ENCODE measurements at regions of chr2 and their contacts with region 1.

Region 1: GRCh38 chr2:119759451-119760236 is at the start of gene PTPN4:
- DNase-seq: peak; percentile 88 to 98 (median 96)
- ATAC-seq: peak; percentile 97
- H3K4me3 ChIP-seq: peak within 1 kb of the TSS; percentile 89
- H3K4me3 Mint-ChIP-seq: peak within 1 kb of the TSS; percentile 87 to 97 (median 94)
- H3K27ac ChIP-seq: peak within 1 kb of the TSS; percentile 83
- H3K27ac Mint-ChIP-seq: peak within 1 kb of the TSS; percentile 60 to 95 (median 91)
- H3K4me1 ChIP-seq: peaks cover 25% of the 10 kb centered on the region in 2 donors
- H3K4me1 Mint-ChIP-seq: peaks cover 22 to 51% (median 39%) of the 10 kb centered on the region in 7 donors
- H3K27me3 ChIP-seq: no peaks in the 10 kb centered on the region
- H3K27me3 Mint-ChIP-seq: peaks cover 0 to 2% (median 0%) of the 10 kb centered on the region in 5 donors
- total RNA-seq, gene PTPN4: 59.9 to 122 (median 104) TPM

Region 2: DNA sequence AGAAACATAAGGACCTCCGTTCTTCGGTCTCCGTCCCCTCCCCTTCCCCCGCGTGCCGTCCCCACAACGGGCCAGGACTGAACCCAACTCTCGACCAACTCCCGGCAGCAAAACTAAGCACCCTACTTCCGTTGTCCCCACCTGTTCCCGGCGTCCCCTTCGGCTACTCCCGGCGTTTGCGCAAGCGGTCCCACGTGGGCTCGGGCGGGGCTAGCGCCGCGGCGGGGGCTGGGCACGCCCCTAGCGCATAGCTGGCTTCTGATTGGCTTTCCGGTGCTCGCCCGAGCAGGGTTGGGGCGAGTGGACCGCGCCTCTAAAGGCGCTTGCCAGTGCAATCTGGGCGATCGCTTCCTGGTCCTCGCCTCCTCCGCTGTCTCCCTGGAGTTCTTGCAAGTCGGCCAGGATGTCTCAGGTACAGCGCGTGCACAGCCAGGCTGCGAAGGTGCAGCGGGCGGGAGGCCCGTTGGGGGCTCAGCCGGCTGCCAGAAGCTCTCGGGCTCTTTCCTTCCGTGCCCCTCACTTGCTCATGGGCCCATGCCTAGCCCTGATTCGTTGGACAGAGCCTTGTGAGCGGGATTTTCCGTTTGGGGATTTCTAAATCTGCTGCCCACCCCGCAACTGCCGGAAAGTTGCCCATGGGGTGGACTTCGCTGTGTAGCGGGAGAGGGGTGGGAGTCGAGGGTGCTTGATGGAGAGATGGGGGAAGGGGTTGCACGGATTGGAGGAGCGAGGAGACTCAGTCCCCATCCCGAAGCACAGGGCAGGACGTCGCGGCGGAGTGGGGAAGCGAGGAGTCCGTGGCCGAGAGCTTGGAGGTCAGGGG is 392.8 kb before region 1 on chr2 and contains the starts of genes C2orf76 and DBI:
- CTCF ChIA-PET with region 1: no interaction called
- POLR2A ChIA-PET with region 1: interaction called, 4 read pairs
- intact Hi-C with region 1: loop called (anchors 1 to 5 kb)
- DNase-seq: peak; percentile 82 to 94 (median 89)
- ATAC-seq: peak; percentile 97
- H3K4me3 ChIP-seq: peak within 1 kb of the TSS; percentile 80
- H3K4me3 Mint-ChIP-seq: peak within 1 kb of the TSS; percentile 79 to 99 (median 94)
- H3K27ac ChIP-seq: peak within 1 kb of the TSS; percentile 86
- H3K27ac Mint-ChIP-seq: peak within 1 kb of the TSS; percentile 78 to 97 (median 92)
- H3K4me1 ChIP-seq: peaks cover 10 to 19% of the 10 kb centered on the region in 2 donors
- H3K4me1 Mint-ChIP-seq: peaks cover 37 to 64% (median 47%) of the 10 kb centered on the region in 7 donors
- H3K27me3 ChIP-seq: no peaks in the 10 kb centered on the region
- H3K27me3 Mint-ChIP-seq: no peaks in the 10 kb centered on the region
- total RNA-seq, gene C2orf76: 5.1 to 9.2 (median 8.5) TPM
- total RNA-seq, gene DBI: 29.3 to 111 (median 42.7) TPM

Region 3: DNA sequence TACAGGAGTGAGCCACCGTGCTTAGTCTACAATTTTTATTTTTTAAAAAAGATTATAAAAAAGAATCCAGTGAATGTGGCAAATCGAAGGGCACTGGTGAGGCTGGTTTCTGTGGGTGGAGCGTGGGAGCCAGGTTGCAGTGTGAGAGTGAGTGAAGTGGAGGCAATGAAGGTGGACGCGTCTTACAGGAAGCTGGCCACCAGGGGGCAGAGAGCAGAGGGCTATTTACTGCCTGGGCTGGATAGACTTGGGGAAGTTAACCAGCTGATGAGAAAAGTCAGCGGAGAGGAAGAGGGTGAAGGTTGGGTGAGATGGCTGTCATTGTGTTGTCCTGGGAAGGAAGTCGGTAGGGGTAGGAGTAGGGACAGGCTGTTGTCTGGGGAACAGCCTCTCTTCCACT is 242.2 kb before region 1 on chr2:
- CTCF ChIA-PET with region 1: no interaction called
- POLR2A ChIA-PET with region 1: no interaction called
- intact Hi-C with region 1: no loop called
- DNase-seq: peak in 5 of 9 donors; percentile 4 to 40 (median 18)
- ATAC-seq: peak; percentile 59
- H3K4me3 ChIP-seq: no peak overlapping the region
- H3K4me3 Mint-ChIP-seq: no peak overlapping the region
- H3K27ac ChIP-seq: no peak overlapping the region
- H3K27ac Mint-ChIP-seq: no peak overlapping the region
- H3K4me1 ChIP-seq: no peaks in the 10 kb centered on the region
- H3K4me1 Mint-ChIP-seq: no peaks in the 10 kb centered on the region
- H3K27me3 ChIP-seq: no peaks in the 10 kb centered on the region
- H3K27me3 Mint-ChIP-seq: peaks cover 13 to 55% (median 41%) of the 10 kb centered on the region in 5 donors

Region 4: GRCh38 chr2:119739580-119740255 is 19.9 kb before region 1 on chr2:
- CTCF ChIA-PET with region 1: no interaction called
- POLR2A ChIA-PET with region 1: no interaction called
- intact Hi-C with region 1: no loop called
- DNase-seq: no peak
- ATAC-seq: no peak
- H3K4me3 ChIP-seq: no peak overlapping the region
- H3K4me3 Mint-ChIP-seq: no peak overlapping the region
- H3K27ac ChIP-seq: no peak overlapping the region
- H3K27ac Mint-ChIP-seq: no peak overlapping the region
- H3K4me1 ChIP-seq: no peaks in the 10 kb centered on the region
- H3K4me1 Mint-ChIP-seq: peaks cover 0 to 2% (median 0%) of the 10 kb centered on the region in 7 donors
- H3K27me3 ChIP-seq: no peaks in the 10 kb centered on the region
- H3K27me3 Mint-ChIP-seq: peaks cover 0 to 12% (median 0%) of the 10 kb centered on the region in 5 donors

Region 5: DNA sequence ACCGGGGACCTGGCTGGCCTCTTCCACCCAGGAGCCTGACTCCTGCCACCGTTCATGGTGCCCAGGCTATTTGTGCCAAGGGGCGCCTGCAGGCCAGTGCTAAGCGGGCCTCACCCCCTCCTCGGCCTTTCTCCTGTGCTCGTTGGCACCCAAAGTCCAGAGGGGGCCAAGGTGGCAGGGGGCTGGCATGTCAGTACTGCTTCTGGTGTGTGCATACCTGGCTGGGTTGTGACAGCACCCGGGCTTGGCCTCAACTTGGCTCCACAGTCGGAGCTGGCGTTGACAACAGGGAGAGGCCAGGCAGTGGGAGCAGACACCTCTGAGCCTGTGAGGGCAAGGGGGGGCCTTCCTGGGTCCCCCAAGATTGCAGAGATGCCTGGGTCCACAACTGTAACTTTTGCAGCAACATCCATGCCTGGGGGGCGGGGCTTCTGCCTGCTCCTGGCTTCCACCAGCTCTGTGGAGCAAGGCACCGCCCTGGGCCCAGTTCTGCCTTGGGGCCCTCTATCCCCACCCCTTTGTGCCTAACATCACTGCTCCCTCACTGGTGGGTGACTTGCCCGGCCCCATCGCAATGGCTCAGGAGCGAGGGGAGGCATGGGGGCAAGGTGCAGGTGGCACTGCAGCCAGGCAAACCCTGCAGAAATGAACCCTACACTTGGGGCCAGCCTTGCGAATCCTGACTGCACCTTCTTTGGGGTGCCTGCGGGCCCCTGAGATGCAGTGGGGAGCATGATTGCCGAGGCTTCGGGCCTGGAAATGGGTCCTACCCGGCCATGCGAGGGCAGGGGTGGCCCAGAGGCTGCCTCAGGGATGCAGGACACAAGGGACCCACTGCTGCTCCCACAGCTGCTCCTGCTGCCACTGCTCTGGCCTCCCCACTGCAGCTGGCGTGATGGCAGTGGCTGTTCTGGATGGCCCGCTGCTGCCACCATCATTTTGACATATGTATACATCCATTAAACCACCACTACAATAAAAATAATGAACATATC is 36.0 kb after region 1 on chr2:
- CTCF ChIA-PET with region 1: no interaction called
- POLR2A ChIA-PET with region 1: interaction called, 3 read pairs
- intact Hi-C with region 1: loop called in 1 of 2 experiments (anchors 5 kb)
- DNase-seq: no peak
- ATAC-seq: no peak
- H3K4me3 ChIP-seq: no peak overlapping the region
- H3K4me3 Mint-ChIP-seq: peak overlapping the region in 1 of 10 donors; percentile 19
- H3K27ac ChIP-seq: no peak overlapping the region
- H3K27ac Mint-ChIP-seq: peak overlapping the region in 3 of 9 donors; percentile 14 to 69 (median 58)
- H3K4me1 ChIP-seq: peaks cover 0 to 4% of the 10 kb centered on the region in 2 donors
- H3K4me1 Mint-ChIP-seq: peaks cover 2 to 71% (median 55%) of the 10 kb centered on the region in 7 donors
- H3K27me3 ChIP-seq: no peaks in the 10 kb centered on the region
- H3K27me3 Mint-ChIP-seq: no peaks in the 10 kb centered on the region

Region 6: DNA sequence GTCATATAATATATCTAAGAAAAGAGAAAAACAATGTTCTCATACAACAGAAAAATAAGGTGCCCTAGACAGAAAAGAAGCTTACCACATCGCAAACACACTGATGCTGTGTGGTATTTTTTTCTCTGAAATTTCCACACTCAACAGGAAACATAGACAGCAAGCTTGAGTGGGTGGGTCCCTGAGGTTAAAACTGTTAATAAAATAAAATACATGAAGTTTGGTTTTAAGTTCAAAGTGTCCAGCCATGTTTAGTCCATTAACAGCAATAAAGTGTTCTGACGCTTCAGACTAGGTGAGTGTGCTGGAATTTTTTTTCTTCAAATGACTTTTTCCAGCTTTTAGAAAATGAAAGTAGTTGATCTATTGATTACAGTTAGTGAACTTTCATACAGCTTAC is 169.9 kb after region 1 on chr2:
- CTCF ChIA-PET with region 1: interaction called, 3 read pairs
- POLR2A ChIA-PET with region 1: interaction called, 7 read pairs
- intact Hi-C with region 1: loop called (anchors 1 to 5 kb)
- DNase-seq: peak in 7 of 9 donors; percentile 36 to 72 (median 57)
- ATAC-seq: peak; percentile 90
- H3K4me3 ChIP-seq: peak overlapping the region; percentile 53
- H3K4me3 Mint-ChIP-seq: peak overlapping the region; percentile 61 to 93 (median 85)
- H3K27ac ChIP-seq: peak overlapping the region; percentile 76
- H3K27ac Mint-ChIP-seq: peak overlapping the region; percentile 88 to 98 (median 93)
- H3K4me1 ChIP-seq: peaks cover 34 to 60% of the 10 kb centered on the region in 2 donors
- H3K4me1 Mint-ChIP-seq: peaks cover 34 to 84% (median 75%) of the 10 kb centered on the region in 7 donors
- H3K27me3 ChIP-seq: no peaks in the 10 kb centered on the region
- H3K27me3 Mint-ChIP-seq: no peaks in the 10 kb centered on the region

Region 7: DNA sequence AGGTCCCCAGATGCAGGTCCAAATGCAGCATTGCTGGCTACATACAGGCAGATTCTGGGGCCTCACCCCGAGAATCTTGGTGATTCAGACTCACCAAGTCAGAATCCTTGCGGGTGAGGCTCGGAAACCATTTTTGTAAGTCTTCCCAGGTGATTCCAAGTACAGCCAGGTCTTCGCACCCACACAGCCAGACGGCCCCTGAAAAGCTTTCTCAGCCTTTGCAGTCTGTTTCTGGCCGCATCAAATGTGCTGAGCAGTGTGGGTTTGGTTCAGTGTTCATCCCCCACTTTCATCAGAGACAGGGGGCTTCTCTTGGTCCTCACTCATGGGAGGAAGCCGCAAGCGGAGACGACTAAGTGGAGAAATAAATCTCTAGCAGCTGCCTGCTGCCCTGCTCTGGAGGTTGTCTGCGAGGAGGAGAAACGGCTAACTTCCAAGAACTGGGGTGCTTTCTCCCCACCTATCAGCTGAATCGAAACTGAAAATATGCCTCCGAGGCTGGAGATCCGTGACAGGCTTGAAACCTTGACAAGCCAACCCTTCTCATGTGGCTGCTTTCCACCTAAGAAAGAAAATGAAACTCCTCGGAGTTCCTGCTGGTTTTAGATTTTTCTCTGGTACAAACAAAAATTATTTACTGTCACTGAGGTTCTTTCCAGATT is 472.5 kb after region 1 on chr2:
- CTCF ChIA-PET with region 1: no interaction called
- POLR2A ChIA-PET with region 1: interaction called, 3 read pairs
- intact Hi-C with region 1: loop called in 1 of 2 experiments (anchors 1 kb)
- DNase-seq: peak; percentile 19 to 82 (median 77)
- ATAC-seq: peak; percentile 93
- H3K4me3 ChIP-seq: peak overlapping the region; percentile 72
- H3K4me3 Mint-ChIP-seq: peak overlapping the region; percentile 86 to 100 (median 96)
- H3K27ac ChIP-seq: peak overlapping the region; percentile 81
- H3K27ac Mint-ChIP-seq: peak overlapping the region; percentile 93 to 98 (median 96)
- H3K4me1 ChIP-seq: peaks cover 19 to 29% of the 10 kb centered on the region in 2 donors
- H3K4me1 Mint-ChIP-seq: peaks cover 15 to 65% (median 59%) of the 10 kb centered on the region in 7 donors
- H3K27me3 ChIP-seq: no peaks in the 10 kb centered on the region
- H3K27me3 Mint-ChIP-seq: no peaks in the 10 kb centered on the region

Region 8: GRCh38 chr2:121649596-121650314 is 1890.1 kb after region 1 on chr2:
- CTCF ChIA-PET with region 1: no interaction called
- POLR2A ChIA-PET with region 1: no interaction called
- intact Hi-C with region 1: loop called in 1 of 2 experiments (anchors 1 kb)
- DNase-seq: peak; percentile 89 to 99 (median 97)
- ATAC-seq: peak; percentile 97
- H3K4me3 ChIP-seq: peak overlapping the region; percentile 88
- H3K4me3 Mint-ChIP-seq: peak overlapping the region; percentile 92 to 100 (median 98)
- H3K27ac ChIP-seq: peak overlapping the region; percentile 90
- H3K27ac Mint-ChIP-seq: peak overlapping the region; percentile 98 to 100 (median 99)
- H3K4me1 ChIP-seq: peaks cover 10 to 11% of the 10 kb centered on the region in 2 donors
- H3K4me1 Mint-ChIP-seq: peaks cover 54 to 88% (median 76%) of the 10 kb centered on the region in 7 donors
- H3K27me3 ChIP-seq: no peaks in the 10 kb centered on the region
- H3K27me3 Mint-ChIP-seq: peaks cover 0 to 2% (median 0%) of the 10 kb centered on the region in 5 donors